Panc1 (cell line): ENCODE measurements at regions of chr12 and their contacts with region 1.

Region 1: DNA sequence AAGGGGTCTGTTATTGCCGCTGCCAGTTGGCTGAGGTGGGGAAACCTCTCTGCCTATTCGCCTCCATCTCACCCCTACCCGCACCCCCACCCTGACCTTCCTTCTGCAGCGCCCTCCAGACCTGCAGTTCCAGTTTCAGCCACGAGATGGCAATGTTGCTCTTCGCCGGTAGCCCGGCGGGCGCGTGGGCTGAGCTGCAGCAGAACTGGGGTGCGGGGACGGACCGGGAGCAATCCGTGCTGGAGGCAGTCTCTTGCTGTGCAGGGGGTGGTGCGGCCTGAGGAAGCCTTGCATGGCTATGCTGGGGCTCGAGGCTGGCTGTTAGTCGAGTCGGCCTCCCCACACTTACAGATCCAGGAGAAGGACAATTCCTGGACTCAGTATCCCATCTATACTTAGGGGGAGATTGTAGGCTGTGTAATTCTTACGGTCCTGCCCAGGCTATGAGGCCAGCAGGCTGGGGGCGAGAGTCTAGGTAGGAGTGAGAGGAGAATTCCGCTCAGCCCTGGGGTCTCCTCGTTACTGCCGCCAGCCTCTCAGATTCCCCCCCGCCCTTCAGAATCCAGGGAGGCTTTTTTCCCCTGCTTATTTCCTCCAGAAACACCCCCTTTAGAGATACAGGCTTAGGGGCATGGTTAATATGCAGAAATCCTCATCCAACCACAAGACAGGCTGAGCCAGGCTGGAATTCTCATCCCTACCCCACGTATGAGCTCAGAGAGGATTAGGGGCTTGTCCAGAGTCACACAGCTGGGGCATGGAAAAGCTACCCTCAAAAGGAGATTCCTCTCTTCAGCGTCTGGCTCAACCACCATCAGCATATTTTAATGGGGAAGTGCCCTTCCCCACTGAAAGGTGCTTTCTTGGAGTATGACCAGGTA is 118.2 kb downstream of the AACS start:
- DNase-seq: peak; percentile 41
- ATAC-seq: peak; percentile 76
- H3K4me3 ChIP-seq: no peak overlapping the region
- H3K27ac ChIP-seq: no peak overlapping the region
- H3K4me1 ChIP-seq: peaks cover 17% of the 10 kb centered on the region
- H3K27me3 ChIP-seq: peaks cover 24% of the 10 kb centered on the region
- CTCF ChIP-seq: peak; percentile 99

Region 2: DNA sequence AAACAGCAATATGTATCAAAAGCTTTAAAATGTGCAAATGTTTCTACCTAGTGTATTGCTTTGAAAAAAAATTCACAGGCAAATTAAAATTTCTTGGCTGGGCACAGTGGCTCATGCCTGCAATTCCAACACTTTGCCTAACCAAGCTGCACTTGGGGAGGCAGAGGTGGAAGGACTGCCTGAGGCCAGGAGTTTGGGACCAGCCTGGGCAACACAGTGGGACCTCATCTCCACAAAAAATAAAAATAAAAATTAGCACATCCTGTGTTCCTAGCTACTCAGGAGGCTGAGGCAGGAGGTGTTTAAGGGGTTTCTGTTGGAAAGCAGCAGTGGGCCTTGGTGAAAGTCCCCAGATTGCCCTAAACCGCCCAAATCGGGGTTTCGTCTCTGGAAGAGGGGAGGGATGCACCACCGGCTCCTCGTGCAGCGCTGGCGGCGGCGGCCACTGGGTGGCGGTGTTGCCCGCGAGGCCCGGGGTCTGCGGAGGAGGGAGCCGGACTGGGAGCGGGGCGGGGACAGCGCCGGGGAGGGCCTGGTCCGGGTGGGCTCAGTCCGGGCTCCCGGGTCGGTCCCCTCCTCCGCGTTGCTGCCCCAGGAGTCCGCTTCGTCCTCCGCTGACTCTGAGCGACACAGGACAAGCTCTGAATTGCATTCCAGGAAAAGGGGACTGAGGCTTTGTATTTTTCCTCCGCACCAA is 147.4 kb after region 1 on chr12:
- CTCF ChIA-PET with region 1: no interaction called
- POLR2A ChIA-PET with region 1: no interaction called
- in situ Hi-C with region 1: no loop called
- intact Hi-C with region 1: loop called (anchors 5 kb)
- DNase-seq: no peak
- ATAC-seq: peak; percentile 98
- H3K4me3 ChIP-seq: peak overlapping the region; percentile 36 to 69
- H3K27ac ChIP-seq: no peak overlapping the region
- H3K4me1 ChIP-seq: no peaks in the 10 kb centered on the region
- H3K27me3 ChIP-seq: peaks cover 4% of the 10 kb centered on the region
- CTCF ChIP-seq: peak; percentile 99

Region 3: GRCh38 chr12:125533434-125534029 is 350.1 kb after region 1 on chr12:
- CTCF ChIA-PET with region 1: no interaction called
- POLR2A ChIA-PET with region 1: no interaction called
- in situ Hi-C with region 1: no loop called
- intact Hi-C with region 1: loop called (anchors 10 kb)
- DNase-seq: no peak
- ATAC-seq: peak; percentile 90
- H3K4me3 ChIP-seq: no peak overlapping the region
- H3K27ac ChIP-seq: no peak overlapping the region
- H3K4me1 ChIP-seq: no peaks in the 10 kb centered on the region
- H3K27me3 ChIP-seq: 0 out of 2 replicates have a peak, but pooled peaks cover 2% of the 10 kb centered on the region
- CTCF ChIP-seq: peak; percentile 92